CD8-positive, alpha-beta memory T cell (primary cell): ENCODE measurements at regions of chr6 and their contacts with region 1.

Region 1: DNA sequence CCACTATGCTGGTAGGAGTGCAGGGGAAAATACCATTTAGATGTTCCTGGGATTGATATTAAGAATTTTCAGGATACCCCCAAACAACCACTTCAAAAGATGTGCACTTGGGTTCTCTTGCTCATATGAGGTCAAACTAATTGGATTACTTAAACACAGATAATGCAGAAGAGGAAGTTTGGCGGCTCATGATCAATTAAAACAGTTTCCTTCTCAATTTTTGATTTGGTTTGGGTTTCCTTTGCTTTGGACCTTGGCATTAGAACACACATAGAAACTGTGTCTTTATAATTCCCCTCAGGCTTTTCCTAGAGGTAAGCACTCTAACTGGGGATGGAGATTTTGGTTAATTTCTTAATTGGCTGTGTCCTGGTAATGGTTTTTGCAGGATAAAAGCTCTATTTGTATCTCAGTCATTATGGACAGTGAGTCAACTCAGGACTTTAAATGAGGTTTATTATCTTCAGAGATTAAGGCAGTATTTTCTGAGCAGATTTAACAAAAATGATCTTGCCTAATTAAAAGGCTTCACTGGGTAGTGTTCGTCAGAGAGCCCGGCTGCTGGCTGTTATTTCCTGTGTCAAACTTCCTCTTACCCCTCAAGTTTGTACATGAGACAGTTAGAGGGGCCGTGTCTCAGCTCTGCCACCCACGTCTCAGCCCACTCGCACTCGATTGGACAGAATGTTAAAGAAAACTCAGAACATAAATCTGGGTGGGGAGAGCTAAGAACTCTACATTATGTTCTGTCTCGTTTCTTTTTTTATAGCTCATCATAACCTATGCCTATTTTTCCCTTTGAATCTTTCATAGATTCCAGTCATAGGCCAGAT is 50.3 kb upstream of the PREP start:
- DNase-seq: peak; percentile 58 to 81 (median 72)
- H3K4me3 ChIP-seq: peak overlapping the region; percentile 30
- H3K4me3 Mint-ChIP-seq: peak overlapping the region; percentile 80 to 92 (median 86)
- H3K27ac ChIP-seq: peak overlapping the region; percentile 64
- H3K27ac Mint-ChIP-seq: peak overlapping the region; percentile 85 to 97 (median 94)
- H3K4me1 ChIP-seq: peaks cover 19% of the 10 kb centered on the region
- H3K4me1 Mint-ChIP-seq: peaks cover 54 to 65% (median 59%) of the 10 kb centered on the region in 3 donors
- H3K27me3 ChIP-seq: no peaks in the 10 kb centered on the region
- H3K27me3 Mint-ChIP-seq: peaks cover 0 to 3% of the 10 kb centered on the region in 2 donors

Region 2: GRCh38 chr6:105484238-105485161 is 31.4 kb after region 1 on chr6:
- CTCF ChIA-PET with region 1: interaction called, 11 read pairs
- POLR2A ChIA-PET with region 1: interaction called, 9 read pairs
- DNase-seq: peak in 2 of 5 donors; percentile 18 to 37
- H3K4me3 ChIP-seq: no peak overlapping the region
- H3K4me3 Mint-ChIP-seq: peak overlapping the region; percentile 62 to 87 (median 78)
- H3K27ac ChIP-seq: no peak overlapping the region
- H3K27ac Mint-ChIP-seq: peak overlapping the region; percentile 69 to 99 (median 89)
- H3K4me1 ChIP-seq: no peaks in the 10 kb centered on the region
- H3K4me1 Mint-ChIP-seq: peaks cover 34 to 60% (median 50%) of the 10 kb centered on the region in 3 donors
- H3K27me3 ChIP-seq: no peaks in the 10 kb centered on the region
- H3K27me3 Mint-ChIP-seq: no peaks in the 10 kb centered on the region

Region 3: DNA sequence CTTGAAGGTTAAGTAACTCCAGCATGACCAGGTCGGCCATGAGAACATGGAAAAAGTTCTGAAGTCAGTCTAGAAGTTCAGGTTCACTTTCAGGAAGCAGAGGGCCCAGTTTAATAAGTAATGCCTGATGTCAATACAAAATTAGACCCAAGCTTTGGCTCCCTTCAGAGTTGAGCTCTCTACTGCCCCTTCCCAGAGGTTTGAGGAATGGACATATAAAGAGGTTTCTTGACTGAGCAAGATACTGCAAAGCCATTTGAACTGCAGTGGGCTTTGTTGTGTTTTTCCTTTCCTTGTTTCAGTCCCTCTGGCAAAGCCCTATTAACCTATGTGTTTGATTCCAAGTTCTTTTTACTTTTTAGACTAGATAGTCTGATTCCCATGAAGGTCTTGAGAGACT is 47.6 kb after region 1 on chr6:
- CTCF ChIA-PET with region 1: no interaction called
- POLR2A ChIA-PET with region 1: no interaction called
- DNase-seq: no peak
- H3K4me3 ChIP-seq: no peak overlapping the region
- H3K4me3 Mint-ChIP-seq: no peak overlapping the region
- H3K27ac ChIP-seq: no peak overlapping the region
- H3K27ac Mint-ChIP-seq: no peak overlapping the region
- H3K4me1 ChIP-seq: no peaks in the 10 kb centered on the region
- H3K4me1 Mint-ChIP-seq: no peaks in the 10 kb centered on the region
- H3K27me3 ChIP-seq: no peaks in the 10 kb centered on the region
- H3K27me3 Mint-ChIP-seq: no peaks in the 10 kb centered on the region

Region 4: DNA sequence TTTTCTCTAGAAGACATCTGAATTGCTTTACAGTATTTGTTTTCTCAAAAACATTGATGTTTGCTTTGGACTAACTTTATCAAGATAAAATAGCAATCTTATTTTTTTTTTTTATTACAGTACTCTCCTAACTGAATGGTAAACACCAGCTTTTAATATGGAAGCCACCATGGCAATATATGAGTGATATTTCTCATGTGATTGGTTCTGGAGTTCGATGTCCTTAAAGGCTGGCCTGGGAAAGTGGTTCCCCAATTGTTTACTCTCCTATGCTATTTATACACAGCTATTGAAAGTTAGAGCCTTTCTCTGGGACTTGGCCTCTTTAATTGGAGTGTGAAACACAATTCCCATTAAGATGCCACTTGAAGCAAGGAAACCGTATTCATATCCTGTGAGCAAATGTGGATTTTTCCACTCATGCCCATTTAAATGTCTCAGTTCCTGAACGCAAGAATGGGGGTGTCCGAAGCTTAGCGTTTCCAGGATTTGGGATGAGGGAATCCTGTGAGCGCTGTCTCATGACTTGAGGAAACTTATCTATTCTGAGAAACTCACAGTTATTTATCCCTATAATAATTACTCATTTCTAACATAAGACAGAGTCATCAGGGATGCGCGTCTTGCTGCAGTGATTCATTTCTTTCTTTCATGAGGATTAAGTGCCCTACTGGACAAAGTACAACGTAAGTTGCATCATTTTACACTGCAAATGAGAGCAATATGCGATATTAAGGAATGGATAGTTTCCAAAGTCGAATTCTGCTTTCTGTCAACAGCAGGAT is 93.0 kb after region 1 on chr6:
- CTCF ChIA-PET with region 1: no interaction called
- POLR2A ChIA-PET with region 1: no interaction called
- DNase-seq: no peak
- H3K4me3 ChIP-seq: no peak overlapping the region
- H3K4me3 Mint-ChIP-seq: no peak overlapping the region
- H3K27ac ChIP-seq: no peak overlapping the region
- H3K27ac Mint-ChIP-seq: no peak overlapping the region
- H3K4me1 ChIP-seq: no peaks in the 10 kb centered on the region
- H3K4me1 Mint-ChIP-seq: no peaks in the 10 kb centered on the region
- H3K27me3 ChIP-seq: no peaks in the 10 kb centered on the region
- H3K27me3 Mint-ChIP-seq: peaks cover 0 to 2% of the 10 kb centered on the region in 2 donors